Activated CD4-positive, alpha-beta memory T cell treated with anti-CD3 and anti-CD28 coated beads for 36 hours (primary cell): ENCODE measurements at regions of chr6 and their contacts with region 1.

Region 1: DNA sequence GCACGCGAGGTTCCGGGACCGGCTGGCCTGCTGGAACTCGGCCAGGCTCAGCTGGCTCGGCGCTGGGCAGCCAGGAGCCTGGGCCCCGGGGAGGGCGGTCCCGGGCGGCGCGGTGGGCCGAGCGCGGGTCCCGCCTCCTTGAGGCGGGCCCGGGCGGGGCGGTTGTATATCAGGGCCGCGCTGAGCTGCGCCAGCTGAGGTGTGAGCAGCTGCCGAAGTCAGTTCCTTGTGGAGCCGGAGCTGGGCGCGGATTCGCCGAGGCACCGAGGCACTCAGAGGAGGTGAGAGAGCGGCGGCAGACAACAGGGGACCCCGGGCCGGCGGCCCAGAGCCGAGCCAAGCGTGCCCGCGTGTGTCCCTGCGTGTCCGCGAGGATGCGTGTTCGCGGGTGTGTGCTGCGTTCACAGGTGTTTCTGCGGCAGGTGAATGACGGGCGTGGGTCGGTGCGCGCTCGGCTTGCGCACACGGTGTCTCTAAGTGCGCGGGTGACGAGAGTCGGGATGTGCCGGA is at the start of gene CDKN1A:
- DNase-seq: peak; percentile 84
- H3K4me3 Mint-ChIP-seq: peak within 1 kb of the TSS; percentile 98
- H3K27ac Mint-ChIP-seq: peak within 1 kb of the TSS; percentile 95
- H3K4me1 Mint-ChIP-seq: peaks cover 48% of the 10 kb centered on the region
- H3K27me3 Mint-ChIP-seq: peaks cover 4% of the 10 kb centered on the region
- total RNA-seq, gene CDKN1A: 64.2 to 66.7 TPM

Region 2: DNA sequence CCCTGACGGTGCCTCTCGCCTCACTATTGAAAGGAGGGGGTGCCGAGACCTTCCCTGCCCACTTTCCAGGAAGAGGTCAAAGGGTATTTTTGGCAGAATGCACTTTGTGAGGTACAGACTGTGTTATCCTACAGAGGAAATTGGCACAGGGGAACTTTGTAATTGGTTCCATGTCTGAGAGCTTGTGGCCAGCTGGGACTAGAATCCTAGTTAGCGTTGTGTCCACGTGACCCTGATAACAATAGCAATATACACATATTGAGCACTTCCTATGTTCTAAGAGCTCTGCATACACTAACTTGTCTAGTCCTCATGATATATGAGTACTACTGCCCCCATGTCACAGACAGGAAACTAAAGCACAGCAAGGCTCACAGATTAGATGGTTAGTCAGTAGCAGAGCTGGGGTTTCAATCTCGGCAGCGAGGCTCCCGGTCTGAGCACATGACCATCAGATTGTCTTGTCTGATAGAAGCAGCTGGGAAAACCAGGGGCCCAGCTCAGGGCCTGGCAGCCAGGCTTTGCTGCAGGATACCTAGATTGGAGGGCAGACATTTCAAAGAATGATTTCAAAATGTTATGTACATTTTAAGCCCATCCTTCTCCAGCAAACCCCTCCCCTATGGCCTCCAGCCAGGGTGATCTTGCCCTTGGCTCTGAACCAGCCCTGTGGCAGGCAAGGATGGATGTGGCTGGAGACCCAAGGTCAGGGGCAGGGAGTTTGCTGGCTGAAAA is 546.9 kb before region 1 on chr6:
- CTCF ChIA-PET with region 1: no interaction called
- POLR2A ChIA-PET with region 1: no interaction called
- intact Hi-C with region 1: loop called (anchors 5 kb)
- DNase-seq: peak; percentile 84
- H3K4me3 Mint-ChIP-seq: peak overlapping the region; percentile 83
- H3K27ac Mint-ChIP-seq: peak overlapping the region; percentile 94
- H3K4me1 Mint-ChIP-seq: peaks cover 43% of the 10 kb centered on the region
- H3K27me3 Mint-ChIP-seq: no peaks in the 10 kb centered on the region

Region 3: DNA sequence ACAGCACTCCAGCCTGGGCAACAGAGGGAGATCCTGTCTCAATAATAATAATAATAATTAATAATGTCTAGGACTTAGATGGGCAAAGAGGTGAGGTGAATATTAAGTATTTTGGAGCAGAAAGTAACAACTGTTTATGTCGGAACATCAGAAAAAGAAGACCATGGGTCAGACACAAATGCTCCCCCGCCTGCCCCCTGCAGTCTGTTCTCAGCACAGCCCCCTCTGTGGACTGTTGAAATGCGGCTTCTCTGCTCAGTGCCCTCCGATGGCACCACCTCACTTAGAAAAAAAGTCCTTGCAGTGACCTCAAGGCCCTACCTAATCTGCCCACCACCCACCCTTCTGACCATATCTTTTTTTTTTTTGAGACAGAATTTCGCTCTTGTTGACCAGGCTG is 286.0 kb before region 1 on chr6:
- CTCF ChIA-PET with region 1: no interaction called
- POLR2A ChIA-PET with region 1: no interaction called
- intact Hi-C with region 1: no loop called
- DNase-seq: no peak
- H3K4me3 Mint-ChIP-seq: no peak overlapping the region
- H3K27ac Mint-ChIP-seq: no peak overlapping the region
- H3K4me1 Mint-ChIP-seq: peaks cover 5% of the 10 kb centered on the region
- H3K27me3 Mint-ChIP-seq: peaks cover 8% of the 10 kb centered on the region

Region 4: GRCh38 chr6:36442671-36443470 is 235.7 kb before region 1 on chr6 and contains the starts of genes KCTD20 and PXT1:
- CTCF ChIA-PET with region 1: no interaction called
- POLR2A ChIA-PET with region 1: interaction called, 5 read pairs
- intact Hi-C with region 1: loop called (anchors 1 kb)
- DNase-seq: peak; percentile 93
- H3K4me3 Mint-ChIP-seq: peak within 1 kb of the TSS; percentile 97
- H3K27ac Mint-ChIP-seq: peak within 1 kb of the TSS; percentile 97
- H3K4me1 Mint-ChIP-seq: peaks cover 34% of the 10 kb centered on the region
- H3K27me3 Mint-ChIP-seq: no peaks in the 10 kb centered on the region
- total RNA-seq, gene KCTD20: 48.0 to 51.0 TPM
- total RNA-seq, gene PXT1: 0.22 to 0.29 TPM

Region 5: DNA sequence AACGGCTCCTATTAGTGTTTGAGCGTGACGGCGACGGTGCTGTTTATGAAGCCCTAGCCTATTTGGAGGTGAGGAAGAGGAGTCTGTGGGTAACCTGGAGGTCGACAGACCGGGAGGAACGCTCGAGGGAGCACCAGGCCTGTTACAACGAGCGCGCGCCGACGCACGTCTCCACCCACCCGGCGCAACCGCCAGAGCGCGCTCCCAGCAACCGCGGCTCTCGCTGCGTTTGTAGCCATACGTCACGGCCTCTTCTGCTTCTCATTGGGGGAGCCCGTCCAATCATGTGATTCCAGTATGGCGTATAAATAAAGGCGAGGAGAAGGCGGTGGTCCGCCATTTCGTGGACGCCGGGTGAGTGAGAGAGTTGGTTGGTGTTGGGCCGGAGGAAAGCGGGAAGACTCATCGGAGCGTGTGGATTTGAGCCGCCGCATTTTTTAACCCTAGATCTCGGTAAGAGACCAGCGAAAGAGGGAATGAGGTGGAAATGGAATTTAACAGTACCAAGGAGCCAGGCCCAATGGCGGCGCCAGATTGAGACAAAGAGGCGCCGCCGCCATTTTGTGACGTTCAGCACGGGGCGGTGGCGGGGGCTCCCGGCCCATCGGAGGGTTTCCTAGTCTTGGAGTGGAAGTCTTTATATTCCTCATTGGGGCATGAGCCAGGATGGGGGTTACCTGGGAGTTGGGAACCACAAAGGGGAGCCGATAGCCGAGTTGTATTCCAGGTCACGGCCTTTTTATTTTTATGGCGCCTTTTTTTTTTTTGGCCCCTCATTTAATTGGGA is 84.4 kb before region 1 on chr6 and contains the start of gene SRSF3:
- CTCF ChIA-PET with region 1: interaction called, 9 read pairs
- POLR2A ChIA-PET with region 1: interaction called, 3 read pairs
- intact Hi-C with region 1: loop called (anchors 1 kb)
- DNase-seq: peak; percentile 97
- H3K4me3 Mint-ChIP-seq: peak within 1 kb of the TSS; percentile 96
- H3K27ac Mint-ChIP-seq: peak within 1 kb of the TSS; percentile 99
- H3K4me1 Mint-ChIP-seq: peaks cover 27% of the 10 kb centered on the region
- H3K27me3 Mint-ChIP-seq: peaks cover 2% of the 10 kb centered on the region
- total RNA-seq, gene SRSF3: 390 to 392 TPM

Region 6: DNA sequence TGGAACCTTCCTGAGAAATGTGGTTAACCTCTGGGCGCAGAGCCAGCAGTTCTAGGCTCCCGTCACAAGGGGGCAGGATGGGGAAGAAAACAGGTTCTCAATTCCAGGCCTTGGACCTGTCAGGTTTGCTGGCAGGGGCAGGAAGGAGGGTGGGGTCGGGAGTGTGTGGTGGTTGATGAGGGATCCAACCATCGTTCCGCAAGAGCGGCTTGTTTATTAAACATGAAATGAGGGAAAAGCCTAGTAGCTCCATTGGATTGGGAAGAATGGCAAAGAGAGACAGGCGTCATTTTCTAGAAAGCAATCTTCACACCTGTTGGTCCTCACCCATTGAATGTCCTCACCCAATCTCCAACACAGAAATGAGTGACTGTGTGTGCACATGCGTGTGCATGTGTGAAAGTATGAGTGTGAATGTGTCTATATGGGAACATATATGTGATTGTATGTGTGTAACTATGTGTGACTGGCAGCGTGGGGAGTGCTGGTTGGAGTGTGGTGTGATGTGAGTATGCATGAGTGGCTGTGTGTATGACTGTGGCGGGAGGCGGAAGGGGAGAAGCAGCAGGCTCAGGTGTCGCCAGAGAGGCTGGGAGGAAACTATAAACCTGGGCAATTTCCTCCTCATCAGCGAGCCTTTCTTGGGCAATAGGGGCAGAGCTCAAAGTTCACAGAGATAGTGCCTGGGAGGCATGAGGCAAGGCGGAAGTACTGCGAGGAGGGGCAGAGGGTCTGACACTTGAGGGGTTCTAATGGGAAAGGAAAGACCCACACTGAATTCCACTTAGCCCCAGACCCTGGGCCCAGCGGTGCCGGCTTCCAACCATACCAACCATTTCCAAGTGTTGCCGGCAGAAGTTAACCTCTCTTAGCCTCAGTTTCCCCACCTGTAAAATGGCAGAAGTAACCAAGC is 54.8 kb before region 1 on chr6:
- CTCF ChIA-PET with region 1: interaction called, 13 read pairs
- POLR2A ChIA-PET with region 1: no interaction called
- intact Hi-C with region 1: loop called (anchors 1 kb)
- DNase-seq: peak; percentile 87
- H3K4me3 Mint-ChIP-seq: no peak overlapping the region
- H3K27ac Mint-ChIP-seq: no peak overlapping the region
- H3K4me1 Mint-ChIP-seq: peaks cover 14% of the 10 kb centered on the region
- H3K27me3 Mint-ChIP-seq: no peaks in the 10 kb centered on the region

Region 7: DNA sequence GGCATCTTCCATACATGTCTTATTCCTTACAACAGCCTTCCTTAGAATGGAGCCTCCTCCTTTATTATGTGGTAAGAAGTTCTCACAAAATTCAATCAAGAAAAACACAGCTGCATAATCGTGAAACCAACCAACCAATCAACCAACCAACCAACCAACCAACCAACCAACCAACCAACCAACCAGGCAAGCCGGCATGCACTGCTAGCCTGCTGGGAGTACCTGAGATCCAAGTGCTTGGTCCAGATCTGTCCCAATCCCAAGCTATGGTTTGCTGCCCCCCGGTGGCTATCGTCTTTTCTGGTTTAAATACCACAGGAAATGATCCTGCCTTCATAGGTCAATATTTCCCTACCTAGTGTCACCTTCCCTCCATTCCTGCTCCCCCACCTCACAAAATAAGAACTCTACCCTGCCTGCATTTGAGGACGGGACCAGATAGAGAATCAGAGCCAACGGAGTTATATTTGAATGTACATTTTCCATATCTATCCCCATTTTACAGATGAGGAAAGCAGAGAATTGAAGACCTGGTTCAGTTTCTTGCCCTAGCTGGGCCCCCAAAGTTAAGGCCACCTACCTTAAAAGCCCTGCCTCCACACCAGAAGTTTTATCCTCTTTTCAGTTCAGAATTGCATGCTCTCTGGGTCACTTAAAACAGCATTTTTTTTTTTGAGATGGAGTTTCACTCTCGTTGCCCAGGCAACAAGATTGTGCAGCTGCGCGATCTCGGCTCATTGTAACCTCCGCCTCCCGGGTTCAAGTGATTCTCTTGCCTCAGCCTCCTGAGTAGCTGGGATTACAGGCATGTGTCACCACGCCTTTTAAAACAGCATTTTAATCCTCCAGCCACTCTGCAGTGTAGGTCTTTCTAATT is 46.2 kb after region 1 on chr6:
- CTCF ChIA-PET with region 1: no interaction called
- POLR2A ChIA-PET with region 1: no interaction called
- intact Hi-C with region 1: loop called (anchors 5 kb)
- DNase-seq: peak; percentile 79
- H3K4me3 Mint-ChIP-seq: no peak overlapping the region
- H3K27ac Mint-ChIP-seq: no peak overlapping the region
- H3K4me1 Mint-ChIP-seq: peaks cover 20% of the 10 kb centered on the region
- H3K27me3 Mint-ChIP-seq: no peaks in the 10 kb centered on the region

Region 8: GRCh38 chr6:36874443-36875249 is 196.1 kb after region 1 on chr6 and contains the start of gene PPIL1:
- CTCF ChIA-PET with region 1: interaction called, 5 read pairs
- POLR2A ChIA-PET with region 1: no interaction called
- intact Hi-C with region 1: loop called (anchors 5 kb)
- DNase-seq: peak; percentile 88
- H3K4me3 Mint-ChIP-seq: peak within 1 kb of the TSS; percentile 98
- H3K27ac Mint-ChIP-seq: peak within 1 kb of the TSS; percentile 99
- H3K4me1 Mint-ChIP-seq: peaks cover 40% of the 10 kb centered on the region
- H3K27me3 Mint-ChIP-seq: peaks cover 2% of the 10 kb centered on the region
- total RNA-seq, gene PPIL1: 38.5 to 40.6 TPM